ENCODE measurements at regions of chr19 and their contacts with region 1.

Region 1: GRCh38 chr19:15323496-15324227 is 8.7 kb downstream of the BRD4 start:
- DNase-seq: peak; percentile 57 to 64
- H3K4me3 ChIP-seq: no peak overlapping the region
- H3K27ac ChIP-seq: peak overlapping the region; percentile 51 to 79 (median 67)
- H3K4me1 ChIP-seq: peaks cover 86 to 100% (median 93%) of the 10 kb centered on the region in 4 donors
- H3K27me3 ChIP-seq: no peaks in the 10 kb centered on the region
- CTCF ChIP-seq: no peak
- EP300 ChIP-seq: no peak
- POLR2A ChIP-seq: no peak

Region 2: GRCh38 chr19:15251749-15252397 is 71.8 kb before region 1 on chr19:
- intact Hi-C with region 1: no loop called
- DNase-seq: peak; percentile 33 to 91
- H3K4me3 ChIP-seq: peak overlapping the region in 1 of 4 donors; percentile 26
- H3K27ac ChIP-seq: peak overlapping the region; percentile 61 to 91 (median 87)
- H3K4me1 ChIP-seq: peaks cover 60 to 73% (median 66%) of the 10 kb centered on the region in 4 donors
- H3K27me3 ChIP-seq: no peaks in the 10 kb centered on the region
- CTCF ChIP-seq: peak in 2 of 7 experiments; percentile 12 to 26
- EP300 ChIP-seq: no peak
- POLR2A ChIP-seq: no peak

Region 3: DNA sequence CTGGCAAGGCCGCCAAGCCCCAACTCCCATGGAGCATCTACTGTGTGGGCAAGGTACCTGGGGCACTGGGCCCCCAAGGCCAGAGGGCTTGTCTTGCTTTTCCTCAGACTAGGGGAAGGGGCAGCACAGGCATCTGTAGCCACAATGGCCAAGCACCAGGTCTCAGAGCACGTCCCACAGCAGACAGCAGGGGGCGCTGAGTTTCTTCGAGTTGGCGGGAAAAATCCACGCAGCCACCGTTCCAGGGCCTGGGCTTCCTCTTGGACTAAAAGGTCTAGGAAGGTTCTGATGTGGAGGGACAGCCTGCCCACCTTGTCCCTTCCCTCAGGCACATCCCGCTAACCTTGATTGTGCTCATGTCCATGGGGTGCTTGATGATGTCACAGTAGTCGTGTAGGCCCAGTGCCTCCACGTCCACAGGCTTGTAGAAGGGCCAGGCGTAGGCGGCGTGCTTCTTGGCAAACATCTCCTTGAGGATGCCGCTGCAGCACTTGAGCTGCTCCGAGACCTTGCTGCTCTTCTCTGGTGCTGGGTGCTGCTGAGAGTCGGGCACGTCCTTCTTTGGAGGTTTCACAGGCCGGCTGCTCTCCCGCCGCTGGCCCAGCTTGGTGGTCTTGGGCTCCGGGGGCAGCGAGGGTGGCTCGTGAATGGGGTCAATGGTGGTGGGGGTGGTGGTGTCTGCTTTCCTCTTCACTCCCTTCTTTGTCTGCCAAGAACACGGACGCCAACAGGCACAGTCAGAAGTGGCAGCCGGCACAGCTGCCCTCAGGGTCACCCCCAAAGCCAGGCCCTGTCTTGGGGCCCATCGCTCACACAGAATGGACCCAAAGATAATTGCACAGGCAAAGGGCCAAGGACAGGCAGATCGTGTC is 59.4 kb before region 1 on chr19:
- intact Hi-C with region 1: loop called (anchors 10 kb)
- DNase-seq: peak; percentile 80 to 87
- H3K4me3 ChIP-seq: no peak overlapping the region
- H3K27ac ChIP-seq: peak overlapping the region; percentile 16 to 90 (median 82)
- H3K4me1 ChIP-seq: peaks cover 46 to 68% (median 61%) of the 10 kb centered on the region in 4 donors
- H3K27me3 ChIP-seq: no peaks in the 10 kb centered on the region
- CTCF ChIP-seq: peak in 5 of 7 experiments; percentile 58 to 82 (median 72)
- EP300 ChIP-seq: no peak
- POLR2A ChIP-seq: no peak

Region 4: DNA sequence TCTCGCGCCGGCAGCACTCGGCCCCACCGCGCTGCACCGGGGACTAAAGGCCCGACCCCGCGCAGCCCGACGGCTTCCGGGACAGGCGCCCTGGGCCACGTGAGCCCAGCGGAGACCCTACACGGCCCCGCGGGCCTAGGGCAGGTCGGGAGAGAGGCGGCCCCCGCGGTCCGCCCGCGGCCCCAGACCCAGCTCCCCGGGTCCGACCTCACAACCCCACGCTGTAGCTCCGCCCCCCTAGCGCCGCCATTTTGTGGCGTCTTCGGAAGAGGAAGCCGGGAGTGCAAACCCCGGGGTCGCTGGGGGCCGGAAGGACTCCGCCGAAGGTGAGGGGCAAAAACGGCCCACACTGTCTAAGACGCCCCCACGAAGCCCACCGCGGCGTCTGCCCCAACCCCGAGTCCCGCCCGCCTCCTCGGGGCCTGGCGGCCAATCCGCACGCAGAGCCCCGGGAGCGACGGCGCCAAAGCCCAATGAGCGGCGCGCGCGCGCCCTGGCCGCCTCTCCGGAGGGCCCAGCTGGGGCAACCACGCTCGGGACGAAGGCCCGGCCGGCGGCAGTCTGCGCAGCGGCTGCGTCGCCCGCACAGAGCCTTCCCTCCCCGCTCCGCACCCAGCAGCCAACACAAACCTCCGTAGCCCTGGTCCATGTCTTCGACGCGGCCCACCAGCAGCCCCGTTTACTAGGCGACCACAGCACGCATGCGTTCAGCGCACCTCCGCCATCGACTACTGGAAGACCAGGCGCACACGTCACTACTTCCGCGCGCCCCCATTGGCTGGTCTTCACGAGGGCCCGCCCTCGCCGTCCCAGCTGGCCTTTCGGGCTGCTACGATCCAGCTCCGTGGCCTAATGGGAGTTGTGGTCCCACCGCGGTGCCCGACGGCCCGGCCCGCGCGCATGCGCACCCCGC is 55.7 kb after region 1 on chr19 and contains the start of gene AKAP8:
- intact Hi-C with region 1: no loop called
- DNase-seq: peak; percentile 99 to 100
- H3K4me3 ChIP-seq: peak within 1 kb of the TSS; percentile 78 to 98 (median 93)
- H3K27ac ChIP-seq: peak within 1 kb of the TSS; percentile 90 to 100 (median 98)
- H3K4me1 ChIP-seq: peaks cover 41 to 54% (median 51%) of the 10 kb centered on the region in 4 donors
- H3K27me3 ChIP-seq: no peaks in the 10 kb centered on the region
- CTCF ChIP-seq: no peak
- EP300 ChIP-seq: no peak
- POLR2A ChIP-seq: peak in 2 of 4 donors; percentile 35 to 58
- total RNA-seq, gene AKAP8: 19.8 to 38.7 (median 23.7) TPM

Region 5: GRCh38 chr19:15418588-15419412 is 95.1 kb after region 1 on chr19 and contains the start of gene AKAP8L:
- intact Hi-C with region 1: no loop called
- DNase-seq: peak; percentile 99 to 100
- H3K4me3 ChIP-seq: peak within 1 kb of the TSS; percentile 80 to 99 (median 98)
- H3K27ac ChIP-seq: peak within 1 kb of the TSS; percentile 88 to 94 (median 92)
- H3K4me1 ChIP-seq: peaks cover 50 to 79% (median 72%) of the 10 kb centered on the region in 4 donors
- H3K27me3 ChIP-seq: no peaks in the 10 kb centered on the region
- CTCF ChIP-seq: peak in 5 of 7 experiments; percentile 42 to 79 (median 54)
- EP300 ChIP-seq: peak; percentile 23
- POLR2A ChIP-seq: peak in 1 of 4 donors; percentile 79
- total RNA-seq, gene AKAP8L: 67.8 to 320 (median 120) TPM

Measured in stomach (tissue), 19 donors.